AG04449 (cell line): ENCODE measurements at regions of chr14 and their contacts with region 1.

Region 1: DNA sequence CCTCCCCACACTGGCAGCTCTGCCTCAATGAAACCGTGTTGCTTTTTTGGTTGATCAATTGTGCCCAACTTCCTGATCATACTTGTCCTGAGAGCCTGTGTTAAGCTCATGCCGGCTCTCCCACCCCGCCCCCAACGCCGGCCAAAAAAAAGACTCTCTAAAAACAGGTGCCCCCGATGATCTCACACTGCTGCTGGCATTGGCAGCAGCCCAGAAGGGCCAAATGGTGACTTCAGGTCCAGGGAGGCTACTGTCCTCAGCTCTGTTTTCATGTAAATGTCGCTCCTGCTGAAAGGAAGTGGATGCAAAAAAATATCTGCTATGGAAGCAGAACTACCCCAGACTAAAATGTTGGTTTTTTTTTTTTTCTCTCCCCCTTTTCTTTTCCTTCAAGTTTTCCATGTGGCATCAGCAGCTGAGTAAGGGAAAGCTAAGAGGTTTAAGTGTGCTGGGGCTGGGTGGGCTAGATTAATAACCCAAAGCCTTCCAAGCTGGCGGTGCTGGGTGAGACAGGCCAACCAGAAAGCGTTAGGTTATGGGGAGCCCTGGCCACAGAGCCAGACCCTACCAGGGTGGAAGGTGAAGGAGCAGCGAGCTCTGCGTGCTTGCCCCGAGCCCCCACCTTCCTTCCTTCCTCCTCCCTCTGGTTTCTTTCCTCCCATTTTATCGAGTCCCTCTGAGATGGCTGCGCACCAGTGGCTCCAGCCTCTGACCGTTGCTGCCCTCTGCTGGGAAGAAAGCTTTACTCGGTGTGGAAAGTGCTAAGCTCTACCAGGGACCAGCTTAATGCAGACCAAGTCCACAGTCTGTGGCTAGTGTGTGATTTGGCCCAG is 396.1 kb downstream of the NRXN3 start:
- DNase-seq: peak; percentile 10
- H3K4me3 ChIP-seq: peak overlapping the region; percentile 44
- CTCF ChIP-seq: peak; percentile 84

Region 2: GRCh38 chr14:77654001-77654441 is 912.2 kb before region 1 on chr14:
- CTCF ChIA-PET with region 1: interaction called, 14 read pairs
- POLR2A ChIA-PET with region 1: no interaction called
- DNase-seq: no peak
- H3K4me3 ChIP-seq: no peak overlapping the region
- CTCF ChIP-seq: no peak

Region 3: DNA sequence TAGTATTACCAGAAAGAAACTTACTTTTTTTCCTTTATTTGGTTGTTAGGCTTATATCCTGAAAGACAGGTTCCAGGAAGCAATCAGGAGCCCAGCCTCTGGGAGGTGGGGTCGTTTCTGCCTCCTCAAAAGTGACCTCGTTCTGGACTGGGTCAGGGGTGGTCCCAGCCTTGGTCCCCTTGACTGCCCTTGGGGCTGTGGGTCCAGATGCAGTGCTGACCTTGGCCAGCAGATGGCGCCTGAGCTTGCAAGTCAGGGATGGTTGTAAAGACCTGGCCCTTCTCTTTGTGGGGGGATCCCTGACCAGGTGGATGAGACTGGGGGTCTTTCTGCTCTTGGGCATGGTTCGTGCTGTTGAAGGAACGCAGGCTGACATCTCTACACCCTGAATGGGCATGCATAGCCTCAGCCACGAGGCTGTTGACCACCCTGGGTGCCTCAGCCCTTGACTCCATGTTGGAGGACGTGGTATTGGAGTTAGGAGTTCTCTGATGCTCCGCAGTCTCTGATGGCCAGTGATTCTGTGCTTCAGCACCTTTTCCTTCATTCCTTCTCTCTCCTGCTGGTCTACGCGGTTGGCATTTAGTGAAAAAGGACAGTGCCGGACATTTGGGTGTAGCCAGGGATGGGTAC is 704.0 kb before region 1 on chr14:
- CTCF ChIA-PET with region 1: interaction called, 63 read pairs
- POLR2A ChIA-PET with region 1: no interaction called
- DNase-seq: no peak
- H3K4me3 ChIP-seq: no peak overlapping the region
- CTCF ChIP-seq: peak; percentile 98

Region 4: DNA sequence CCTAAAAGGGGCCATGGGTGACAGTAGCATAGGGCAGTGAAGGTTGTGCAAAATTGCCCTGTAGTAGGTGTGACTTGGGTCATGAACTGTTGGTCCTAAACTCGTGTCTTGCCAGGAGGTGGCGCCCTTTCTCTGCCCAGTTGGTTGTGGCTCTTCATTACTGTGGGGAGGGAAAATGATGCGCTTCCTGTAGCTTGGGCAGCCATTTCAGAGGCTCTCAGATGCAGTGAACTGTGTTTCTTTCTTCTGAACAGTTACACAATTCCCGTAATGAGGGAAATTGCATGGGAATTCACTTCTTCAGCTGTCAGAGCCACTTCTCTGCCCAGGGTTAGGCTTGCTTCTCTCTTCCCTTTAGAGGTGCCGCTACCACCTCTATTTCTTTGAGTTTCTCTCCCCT is 544.2 kb before region 1 on chr14:
- CTCF ChIA-PET with region 1: interaction called, 28 read pairs
- POLR2A ChIA-PET with region 1: no interaction called
- DNase-seq: no peak
- H3K4me3 ChIP-seq: no peak overlapping the region
- CTCF ChIP-seq: peak; percentile 64

Region 5: DNA sequence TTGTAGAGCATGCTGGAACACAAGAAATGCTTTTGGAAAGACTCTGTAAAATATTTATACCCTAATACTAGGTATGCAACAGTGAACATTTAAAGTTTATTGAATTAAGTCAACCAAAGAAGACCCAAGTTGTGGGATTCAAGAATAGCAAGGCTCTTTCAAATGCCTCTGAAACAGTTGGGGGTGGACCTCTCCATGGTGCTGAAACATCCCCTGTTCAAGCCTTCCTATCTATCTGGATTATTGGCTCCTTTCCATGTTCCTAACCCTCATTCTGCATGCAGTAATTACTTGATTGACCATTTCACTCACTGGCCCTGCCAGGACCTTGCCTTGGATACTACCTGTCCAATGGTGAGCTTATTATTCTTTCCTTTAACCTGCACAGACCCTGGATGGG is 46.4 kb before region 1 on chr14:
- CTCF ChIA-PET with region 1: no interaction called
- POLR2A ChIA-PET with region 1: no interaction called
- DNase-seq: no peak
- H3K4me3 ChIP-seq: no peak overlapping the region
- CTCF ChIP-seq: no peak

Region 6: GRCh38 chr14:78581229-78581628 is 15.0 kb after region 1 on chr14:
- CTCF ChIA-PET with region 1: interaction called, 30 read pairs
- POLR2A ChIA-PET with region 1: no interaction called
- DNase-seq: no peak
- H3K4me3 ChIP-seq: no peak overlapping the region
- CTCF ChIP-seq: no peak

Region 7: DNA sequence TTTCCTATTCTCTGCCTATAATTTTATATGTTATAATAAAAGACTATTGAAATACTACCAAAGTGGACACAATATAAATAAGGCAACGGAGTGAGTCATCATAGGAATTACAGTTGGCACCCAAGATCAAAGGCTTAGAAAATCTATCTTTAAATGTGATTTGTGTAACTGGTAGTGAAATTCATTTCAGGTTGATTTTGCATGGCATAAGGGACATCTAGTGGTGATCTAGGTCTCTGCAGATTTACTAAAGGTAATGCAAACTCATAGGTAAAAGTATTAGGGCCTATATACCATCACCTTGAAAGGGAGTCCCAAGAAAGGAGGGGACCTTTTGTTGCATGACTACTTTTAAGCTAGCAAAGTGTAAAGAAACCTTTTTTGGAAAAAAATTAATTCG is 131.1 kb after region 1 on chr14:
- CTCF ChIA-PET with region 1: interaction called, 47 read pairs
- POLR2A ChIA-PET with region 1: no interaction called
- DNase-seq: peak; percentile 14
- H3K4me3 ChIP-seq: no peak overlapping the region
- CTCF ChIP-seq: peak; percentile 58

Region 8: GRCh38 chr14:78848234-78848820 is 282.1 kb after region 1 on chr14:
- CTCF ChIA-PET with region 1: no interaction called
- POLR2A ChIA-PET with region 1: no interaction called
- DNase-seq: no peak
- H3K4me3 ChIP-seq: no peak overlapping the region
- CTCF ChIP-seq: peak; percentile 80

Region 9: GRCh38 chr14:80078501-80078900 is 1512.3 kb after region 1 on chr14:
- CTCF ChIA-PET with region 1: no interaction called
- POLR2A ChIA-PET with region 1: no interaction called
- DNase-seq: no peak
- H3K4me3 ChIP-seq: no peak overlapping the region
- CTCF ChIP-seq: no peak